Aorta (tissue), 5 donors: ENCODE measurements at regions of chr6 and their contacts with region 1.

Region 1: DNA sequence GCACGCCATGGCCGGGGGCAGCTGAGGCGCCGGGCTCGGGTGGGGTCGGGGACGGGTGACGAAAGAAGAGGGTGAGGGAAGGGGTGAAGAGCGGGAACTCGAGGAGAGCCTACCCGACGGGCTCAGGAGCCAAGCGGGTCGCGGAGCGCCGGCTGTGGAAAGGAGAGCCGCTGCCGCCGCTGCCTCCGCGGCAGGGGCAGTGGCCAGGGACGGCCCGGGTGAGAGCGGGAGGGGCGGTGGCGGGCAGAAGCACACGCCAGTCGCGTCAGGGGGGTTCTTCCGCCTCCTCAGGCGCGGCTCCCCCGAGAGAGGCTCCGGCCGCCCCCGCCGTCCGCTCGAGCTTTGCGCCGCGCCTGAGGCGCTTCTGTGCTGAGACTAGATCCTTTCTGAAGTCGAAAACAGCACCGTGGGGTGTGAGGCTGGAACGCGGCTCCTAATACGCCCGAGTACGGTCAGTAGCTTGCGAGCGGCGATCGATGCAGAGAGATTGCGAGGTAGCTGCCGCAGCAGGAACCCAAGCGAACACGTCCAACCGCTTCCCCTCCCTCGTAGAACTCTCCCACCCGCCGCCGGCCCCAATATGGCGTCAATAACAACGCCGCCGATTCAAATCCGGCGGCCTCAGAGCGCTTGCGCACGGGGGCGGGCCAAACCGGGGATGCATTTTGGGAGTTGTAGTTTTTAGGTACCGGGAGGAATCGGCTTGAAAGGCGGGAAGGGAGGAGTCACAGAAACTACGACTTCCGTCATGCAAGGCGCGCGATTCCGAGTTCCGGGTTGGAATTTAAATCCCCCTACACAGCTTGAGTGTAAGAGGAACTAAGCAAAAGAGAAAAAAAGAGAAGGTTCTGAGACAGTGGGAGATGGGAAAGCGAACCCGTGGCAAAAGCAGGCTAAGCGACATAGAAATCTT is at the start of gene AKIRIN2:
- DNase-seq: peak; percentile 98
- ATAC-seq: peak; percentile 97
- H3K4me3 ChIP-seq: peak within 1 kb of the TSS; percentile 90 to 91
- H3K27ac ChIP-seq: peak within 1 kb of the TSS; percentile 50 to 97
- H3K4me1 ChIP-seq: no peaks in the 10 kb centered on the region
- H3K27me3 ChIP-seq: no peaks in the 10 kb centered on the region
- total RNA-seq, gene AKIRIN2: 38.5 to 43.5 TPM

Region 2: DNA sequence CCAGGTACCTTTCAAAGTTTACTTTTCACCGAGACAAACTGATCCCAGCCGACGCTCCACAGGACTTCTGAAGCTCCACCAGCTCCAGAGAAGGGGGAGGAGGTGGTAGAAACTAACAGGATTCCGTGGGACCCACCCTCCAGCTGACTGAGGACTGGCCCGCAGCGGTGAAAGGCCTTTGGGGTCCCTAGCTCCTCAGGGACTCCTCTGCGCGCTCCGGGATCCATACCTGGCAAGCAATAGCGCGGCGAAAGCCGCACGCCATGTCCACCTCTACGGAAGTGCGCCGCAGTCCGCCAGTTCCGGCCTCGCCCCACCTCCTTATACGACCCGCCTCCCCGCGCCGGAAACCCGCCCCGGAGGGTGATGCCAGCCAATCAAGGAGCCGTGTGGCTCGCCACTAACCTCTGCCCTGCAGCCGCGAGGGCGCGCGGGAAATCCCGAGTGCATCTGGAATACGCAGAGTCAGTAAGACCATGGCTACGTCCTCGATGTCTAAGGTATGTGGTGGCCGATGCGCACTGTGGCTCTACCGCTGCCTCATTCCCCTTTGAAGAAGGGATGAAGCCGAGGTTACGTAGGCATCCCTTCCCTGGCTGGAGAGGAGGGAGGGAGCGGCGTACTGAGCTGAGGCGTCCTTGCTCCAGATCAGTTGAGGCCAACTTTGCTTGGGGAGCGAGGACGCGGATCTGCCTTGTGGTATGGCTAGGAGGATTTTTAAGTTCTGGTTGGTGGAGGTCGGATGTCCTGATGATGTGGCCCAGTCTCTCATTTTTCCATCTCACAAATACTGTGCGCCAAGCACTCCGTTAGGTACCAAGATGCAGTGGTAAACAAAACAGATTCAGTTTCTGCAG is 112.0 kb before region 1 on chr6 and contains the starts of genes ORC3 and RARS2:
- intact Hi-C with region 1: loop called (anchors 5 to 10 kb)
- DNase-seq: peak; percentile 98 to 99
- ATAC-seq: peak; percentile 100
- H3K4me3 ChIP-seq: peak within 1 kb of the TSS; percentile 86 to 96
- H3K27ac ChIP-seq: peak within 1 kb of the TSS in 1 of 2 donors; percentile 56
- H3K4me1 ChIP-seq: peaks cover 2 to 14% of the 10 kb centered on the region in 2 donors
- H3K27me3 ChIP-seq: no peaks in the 10 kb centered on the region
- total RNA-seq, gene ORC3: 16.5 to 22.4 TPM
- total RNA-seq, gene RARS2: 36.1 to 38.2 TPM

Region 3: GRCh38 chr6:87656857-87657256 is 45.1 kb before region 1 on chr6:
- intact Hi-C with region 1: loop called in 1 of 2 experiments (anchors 5 kb)
- DNase-seq: no peak
- ATAC-seq: no peak
- H3K4me3 ChIP-seq: no peak overlapping the region
- H3K27ac ChIP-seq: no peak overlapping the region
- H3K4me1 ChIP-seq: no peaks in the 10 kb centered on the region
- H3K27me3 ChIP-seq: no peaks in the 10 kb centered on the region